PC-3 (cell line): ENCODE measurements at regions of chr5 and their contacts with region 1.

Region 1: DNA sequence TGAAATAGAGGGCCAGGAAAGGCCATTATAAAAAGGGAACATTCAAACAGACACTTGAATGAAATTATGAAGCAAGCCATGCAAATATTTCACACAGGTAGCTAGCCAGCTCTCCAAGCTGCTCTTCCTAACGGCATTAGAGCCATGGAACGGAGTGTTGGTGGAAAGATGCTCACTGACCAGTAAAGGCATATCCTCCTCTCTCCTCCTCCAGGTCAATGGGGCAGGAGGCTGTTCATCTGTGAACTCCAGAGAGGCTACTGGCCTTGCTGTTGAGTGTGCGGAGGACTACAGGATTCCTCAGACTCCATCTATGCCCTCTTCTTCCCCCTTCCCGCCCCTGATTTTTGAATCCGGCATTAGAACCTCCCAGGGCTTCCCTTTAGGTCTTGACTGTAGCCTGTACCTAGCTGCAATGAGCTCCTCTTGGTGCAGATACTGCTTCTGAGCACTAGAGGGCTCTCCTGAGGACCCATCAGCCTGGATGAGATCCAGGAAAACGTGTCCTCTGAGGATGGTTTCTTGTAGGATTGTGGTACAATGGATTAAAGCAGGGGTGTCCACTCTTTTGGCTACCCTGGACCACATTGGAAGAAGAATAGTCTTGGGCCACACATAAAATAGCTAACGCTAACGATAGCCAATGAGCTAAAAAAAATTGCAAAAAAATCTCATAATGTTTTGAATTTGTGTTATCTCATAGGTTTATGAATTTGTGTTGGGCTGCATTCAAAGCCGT is 162.2 kb downstream of the SREK1 start:
- DNase-seq: peak; percentile 57
- ATAC-seq: peak; percentile 22
- H3K4me3 ChIP-seq: no peak overlapping the region
- H3K27ac ChIP-seq: no peak overlapping the region
- H3K4me1 ChIP-seq: no peaks in the 10 kb centered on the region
- H3K27me3 ChIP-seq: no peaks in the 10 kb centered on the region
- CTCF ChIP-seq: peak; percentile 63

Region 2: DNA sequence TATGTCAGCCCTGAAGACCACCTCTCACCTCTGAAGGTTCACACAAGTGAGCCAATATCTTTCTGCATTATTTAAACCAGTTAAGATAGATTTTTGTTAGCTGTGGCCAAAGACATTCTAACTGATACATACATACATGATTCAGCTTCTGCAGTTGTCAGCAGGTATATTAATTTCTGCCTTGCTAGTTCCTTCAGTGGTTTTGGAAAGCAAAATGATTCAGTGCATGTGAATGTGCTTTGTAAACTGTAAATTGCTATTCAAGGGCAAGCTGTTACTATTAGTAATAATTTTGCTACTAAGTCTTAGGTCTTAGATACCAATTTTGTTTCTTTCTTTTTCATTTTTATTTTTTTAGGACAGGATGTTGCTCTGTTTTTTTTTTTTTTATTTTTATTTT is 469.1 kb before region 1 on chr5:
- CTCF ChIA-PET with region 1: no interaction called
- POLR2A ChIA-PET with region 1: no interaction called
- intact Hi-C with region 1: no loop called
- DNase-seq: peak; percentile 38
- ATAC-seq: no peak; the same call in 1 of the 2 replicates
- H3K4me3 ChIP-seq: no peak overlapping the region
- H3K27ac ChIP-seq: peak overlapping the region; percentile 11; the same call in 1 of the 2 replicates
- H3K4me1 ChIP-seq: peaks cover 12% of the 10 kb centered on the region
- H3K27me3 ChIP-seq: no peaks in the 10 kb centered on the region
- CTCF ChIP-seq: no peak

Region 3: GRCh38 chr5:66239034-66239433 is 67.2 kb before region 1 on chr5:
- CTCF ChIA-PET with region 1: no interaction called
- POLR2A ChIA-PET with region 1: no interaction called
- intact Hi-C with region 1: loop called (anchors 1 kb)
- DNase-seq: peak; percentile 39
- ATAC-seq: 0 out of 2 replicates have a peak, but pooled peaks have one; percentile 31
- H3K4me3 ChIP-seq: no peak overlapping the region
- H3K27ac ChIP-seq: no peak overlapping the region
- H3K4me1 ChIP-seq: peaks cover 19% of the 10 kb centered on the region
- H3K27me3 ChIP-seq: no peaks in the 10 kb centered on the region
- CTCF ChIP-seq: peak; percentile 52

Region 4: GRCh38 chr5:66255714-66256113 is 50.6 kb before region 1 on chr5:
- CTCF ChIA-PET with region 1: no interaction called
- POLR2A ChIA-PET with region 1: no interaction called
- intact Hi-C with region 1: no loop called
- DNase-seq: no peak
- ATAC-seq: no peak
- H3K4me3 ChIP-seq: no peak overlapping the region
- H3K27ac ChIP-seq: no peak overlapping the region
- H3K4me1 ChIP-seq: no peaks in the 10 kb centered on the region
- H3K27me3 ChIP-seq: no peaks in the 10 kb centered on the region
- CTCF ChIP-seq: no peak

Region 5: GRCh38 chr5:66356011-66356565 is 49.8 kb after region 1 on chr5:
- CTCF ChIA-PET with region 1: no interaction called
- POLR2A ChIA-PET with region 1: no interaction called
- intact Hi-C with region 1: no loop called
- DNase-seq: no peak
- ATAC-seq: no peak
- H3K4me3 ChIP-seq: no peak overlapping the region
- H3K27ac ChIP-seq: no peak overlapping the region
- H3K4me1 ChIP-seq: no peaks in the 10 kb centered on the region
- H3K27me3 ChIP-seq: no peaks in the 10 kb centered on the region
- CTCF ChIP-seq: no peak

Region 6: GRCh38 chr5:66406761-66407336 is 100.6 kb after region 1 on chr5:
- CTCF ChIA-PET with region 1: no interaction called
- POLR2A ChIA-PET with region 1: no interaction called
- intact Hi-C with region 1: no loop called
- DNase-seq: no peak
- ATAC-seq: no peak
- H3K4me3 ChIP-seq: no peak overlapping the region
- H3K27ac ChIP-seq: no peak overlapping the region
- H3K4me1 ChIP-seq: no peaks in the 10 kb centered on the region
- H3K27me3 ChIP-seq: no peaks in the 10 kb centered on the region
- CTCF ChIP-seq: no peak

Region 7: DNA sequence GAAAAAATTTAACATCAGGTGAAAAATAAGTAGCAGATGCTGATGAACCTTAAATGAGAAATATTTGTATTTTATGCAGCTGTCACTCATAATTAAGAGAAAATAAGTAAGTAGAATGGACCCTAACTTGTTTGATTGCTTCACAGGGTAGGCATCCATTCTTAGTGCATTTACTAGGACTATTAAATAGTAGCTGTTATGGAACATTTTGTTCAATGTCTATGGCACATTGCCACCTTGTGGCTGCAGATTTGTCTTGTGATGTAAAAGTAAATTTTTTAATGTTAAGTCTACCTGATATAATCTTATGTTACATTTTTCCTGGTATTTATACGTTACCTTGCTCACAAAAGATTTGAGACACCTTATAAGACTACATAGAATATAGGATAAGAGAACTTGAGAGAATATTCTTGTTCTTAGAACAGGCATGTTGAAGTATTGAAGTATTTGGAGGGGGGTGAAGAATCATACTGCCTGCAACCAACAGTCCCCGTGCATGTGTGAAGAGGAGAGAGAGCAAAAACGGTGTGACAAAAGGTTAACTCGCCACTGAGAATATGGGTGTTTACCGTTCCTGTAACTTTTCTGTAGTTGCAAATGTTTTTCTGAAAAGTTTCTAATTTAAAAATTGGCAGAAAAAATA is 451.0 kb after region 1 on chr5:
- CTCF ChIA-PET with region 1: no interaction called
- POLR2A ChIA-PET with region 1: no interaction called
- intact Hi-C with region 1: loop called (anchors 2 kb)
- DNase-seq: peak; percentile 42
- ATAC-seq: 0 out of 2 replicates have a peak, but pooled peaks have one; percentile 27
- H3K4me3 ChIP-seq: no peak overlapping the region
- H3K27ac ChIP-seq: no peak overlapping the region
- H3K4me1 ChIP-seq: no peaks in the 10 kb centered on the region
- H3K27me3 ChIP-seq: 0 out of 2 replicates have a peak, but pooled peaks cover 5% of the 10 kb centered on the region
- CTCF ChIP-seq: peak; percentile 53